Cardiac septum (tissue), 1 donor: ENCODE measurements at regions of chr14 and their contacts with region 1.

Region 1: GRCh38 chr14:21039585-21040369 is 2.4 kb upstream of the RNASE7 start:
- DNase-seq: no peak

Region 2: DNA sequence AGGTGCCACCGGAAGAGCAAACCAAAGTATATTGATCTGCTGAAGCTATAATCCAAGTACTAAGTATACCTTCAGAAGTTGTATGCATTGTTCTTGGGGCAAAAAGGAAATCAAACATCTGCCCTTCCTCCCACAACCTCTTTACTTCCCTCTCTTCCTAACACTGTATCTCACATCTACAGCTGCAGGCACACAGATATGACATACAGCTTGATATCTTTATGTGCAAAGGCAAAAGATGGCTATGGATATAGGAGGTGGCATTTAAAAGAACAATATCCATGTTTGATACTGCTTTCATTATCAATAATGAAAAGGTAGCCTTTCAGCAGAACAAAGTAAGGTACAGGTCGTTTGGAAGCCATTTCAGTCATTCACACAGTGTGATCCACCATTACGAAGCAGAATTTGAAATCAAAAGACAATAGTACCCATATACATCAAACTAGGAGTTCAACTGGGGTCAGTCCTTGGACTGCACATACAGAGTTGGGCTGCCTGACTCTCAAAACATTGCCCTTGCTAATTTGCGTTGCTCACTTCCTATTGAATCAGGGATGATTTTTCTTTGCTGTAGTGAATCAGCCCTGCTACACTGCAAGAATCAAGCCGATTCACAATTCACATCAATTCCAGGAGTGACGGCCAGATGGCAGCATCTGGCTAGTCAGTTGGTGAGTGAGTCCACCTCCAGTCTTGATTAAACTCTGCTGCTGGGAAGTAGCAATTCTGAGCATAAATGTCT is 342.3 kb before region 1 on chr14:
- intact Hi-C with region 1: loop called (anchors 5 kb)
- DNase-seq: no peak

Region 3: GRCh38 chr14:20989572-20990551 is 49.9 kb before region 1 on chr14 and contains the start of gene METTL17:
- intact Hi-C with region 1: no loop called
- DNase-seq: peak; percentile 93
- total RNA-seq, gene METTL17: 34.6 TPM

Region 4: GRCh38 chr14:21014761-21015190 is 25.0 kb before region 1 on chr14:
- intact Hi-C with region 1: loop called (anchors 1 kb)
- DNase-seq: peak; percentile 83